Activated naive CD4-positive, alpha-beta T cell treated with anti-CD3 and anti-CD28 coated beads for 36 hours (primary cell): ENCODE measurements at regions of chr3 and their contacts with region 1.

Region 1: GRCh38 chr3:32238453-32239306 is at the start of gene CMTM8:
- DNase-seq: peak; percentile 70
- H3K4me3 Mint-ChIP-seq: peak within 1 kb of the TSS; percentile 82
- H3K27ac Mint-ChIP-seq: no peak within 1 kb of the TSS
- H3K4me1 Mint-ChIP-seq: peaks cover 32% of the 10 kb centered on the region
- H3K27me3 Mint-ChIP-seq: peaks cover 2% of the 10 kb centered on the region
- total RNA-seq, gene CMTM8: 16.0 to 19.1 TPM

Region 2: DNA sequence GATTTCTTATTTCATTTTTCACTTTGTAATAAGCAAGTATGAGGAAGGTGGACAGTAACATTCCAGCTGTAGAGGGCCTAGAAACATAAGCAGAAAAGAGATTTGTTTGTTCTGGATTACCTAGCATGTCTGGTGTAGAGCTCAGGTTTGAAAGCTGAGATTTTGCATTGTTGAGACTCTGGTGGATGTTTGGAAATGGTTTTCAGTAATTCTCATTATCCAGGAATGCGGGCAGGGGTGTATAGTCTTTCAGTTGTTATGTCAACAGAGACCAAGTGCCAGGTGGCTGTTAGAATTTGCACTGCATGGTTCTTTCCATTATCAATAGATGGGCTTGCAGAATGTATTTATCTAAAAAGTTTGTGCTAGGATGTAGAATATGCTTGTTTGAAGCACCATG is 121.4 kb before region 1 on chr3:
- CTCF ChIA-PET with region 1: no interaction called
- intact Hi-C with region 1: loop called (anchors 1 kb)
- DNase-seq: no peak
- H3K4me3 Mint-ChIP-seq: no peak overlapping the region
- H3K27ac Mint-ChIP-seq: no peak overlapping the region
- H3K4me1 Mint-ChIP-seq: peaks cover 61% of the 10 kb centered on the region
- H3K27me3 Mint-ChIP-seq: no peaks in the 10 kb centered on the region

Region 3: GRCh38 chr3:32257639-32258038 is 19.0 kb after region 1 on chr3:
- CTCF ChIA-PET with region 1: interaction called, 10 read pairs
- intact Hi-C with region 1: loop called (anchors 2 kb)
- DNase-seq: no peak
- H3K4me3 Mint-ChIP-seq: no peak overlapping the region
- H3K27ac Mint-ChIP-seq: no peak overlapping the region
- H3K4me1 Mint-ChIP-seq: peaks cover 17% of the 10 kb centered on the region
- H3K27me3 Mint-ChIP-seq: no peaks in the 10 kb centered on the region

Region 4: GRCh38 chr3:32334675-32335074 is 96.0 kb after region 1 on chr3:
- CTCF ChIA-PET with region 1: interaction called, 12 read pairs
- intact Hi-C with region 1: loop called (anchors 2 kb)
- DNase-seq: peak; percentile 83
- H3K4me3 Mint-ChIP-seq: no peak overlapping the region
- H3K27ac Mint-ChIP-seq: peak overlapping the region; percentile 19
- H3K4me1 Mint-ChIP-seq: peaks cover 44% of the 10 kb centered on the region
- H3K27me3 Mint-ChIP-seq: no peaks in the 10 kb centered on the region